ENCODE measurements at regions of chr10 and their contacts with region 1.

Region 1: DNA sequence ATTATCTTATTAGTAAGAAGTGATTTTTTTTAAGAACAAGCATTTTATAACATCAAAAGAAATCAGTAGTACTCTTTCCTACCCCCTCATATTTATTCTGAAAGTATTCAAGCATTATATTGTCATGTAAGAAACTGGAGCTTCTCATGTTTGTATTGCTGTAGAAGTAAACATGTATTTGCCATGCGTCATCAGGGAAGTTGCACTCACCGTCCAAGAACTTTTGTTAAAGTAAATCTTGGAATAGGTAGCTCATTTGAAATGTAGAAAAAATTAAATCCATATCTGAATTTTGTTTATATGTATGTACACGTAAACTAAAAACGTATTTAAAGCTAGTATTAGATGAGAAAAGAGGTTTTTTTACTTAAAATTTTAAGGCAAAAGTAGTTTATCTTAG is 96.8 kb downstream of the PTEN start:
- DNase-seq: no peak
- H3K4me3 ChIP-seq: no peak overlapping the region
- CTCF ChIP-seq: no peak
- POLR2A ChIP-seq: no peak

Region 2: GRCh38 chr10:87973635-87974034 is 13.4 kb after region 1 on chr10:
- intact Hi-C with region 1: loop called (anchors 2 kb)
- DNase-seq: no peak
- H3K4me3 ChIP-seq: no peak overlapping the region
- CTCF ChIP-seq: no peak
- POLR2A ChIP-seq: no peak

Measured in lower leg skin (tissue), 4 donors.